ENCODE measurements at regions of chr17 and their contacts with region 1.

Region 1: DNA sequence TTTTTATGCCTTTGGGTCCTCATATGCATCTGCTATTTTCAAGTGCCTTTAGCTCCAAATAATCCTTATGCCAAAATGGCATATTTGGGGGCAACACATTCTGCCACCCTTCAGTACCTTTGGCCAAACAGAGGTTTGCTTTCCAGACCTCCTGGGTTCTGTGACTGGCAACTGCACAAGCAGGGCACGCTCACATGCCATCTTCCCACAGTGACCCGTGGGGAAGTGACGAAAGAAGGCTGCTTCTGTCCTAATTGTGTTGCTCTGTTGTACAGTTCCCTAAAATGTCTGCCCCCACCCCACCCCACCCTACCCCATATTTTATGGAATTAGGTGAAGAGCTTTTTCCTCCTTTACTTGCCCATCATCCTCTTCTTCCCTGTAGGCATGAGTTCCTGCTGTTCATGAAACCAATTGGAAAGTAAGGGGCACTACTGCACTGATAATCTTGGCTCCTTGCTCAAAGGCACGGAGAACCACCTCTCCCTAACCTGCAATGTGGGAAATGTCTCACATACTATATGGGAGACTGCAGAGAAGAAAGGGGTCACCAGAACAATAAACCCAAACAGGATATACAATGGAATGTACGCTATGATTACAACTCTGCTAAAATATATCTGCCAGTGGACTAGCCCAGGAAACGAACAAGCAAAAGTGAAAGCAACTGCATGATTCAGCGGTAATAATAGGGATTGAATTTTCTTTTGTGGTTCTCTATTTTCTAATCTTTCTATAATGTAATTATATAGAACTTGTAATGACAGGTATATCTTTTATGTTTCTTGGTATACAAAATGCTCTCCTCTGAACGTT is 3.3 kb upstream of the SLFN12L start:
- DNase-seq: peak; percentile 46
- ATAC-seq: peak; percentile 30
- H3K4me3 Mint-ChIP-seq: peak overlapping the region; percentile 94
- H3K27ac Mint-ChIP-seq: peak overlapping the region; percentile 99
- H3K4me1 Mint-ChIP-seq: peaks cover 51% of the 10 kb centered on the region
- H3K27me3 Mint-ChIP-seq: no peaks in the 10 kb centered on the region

Region 2: DNA sequence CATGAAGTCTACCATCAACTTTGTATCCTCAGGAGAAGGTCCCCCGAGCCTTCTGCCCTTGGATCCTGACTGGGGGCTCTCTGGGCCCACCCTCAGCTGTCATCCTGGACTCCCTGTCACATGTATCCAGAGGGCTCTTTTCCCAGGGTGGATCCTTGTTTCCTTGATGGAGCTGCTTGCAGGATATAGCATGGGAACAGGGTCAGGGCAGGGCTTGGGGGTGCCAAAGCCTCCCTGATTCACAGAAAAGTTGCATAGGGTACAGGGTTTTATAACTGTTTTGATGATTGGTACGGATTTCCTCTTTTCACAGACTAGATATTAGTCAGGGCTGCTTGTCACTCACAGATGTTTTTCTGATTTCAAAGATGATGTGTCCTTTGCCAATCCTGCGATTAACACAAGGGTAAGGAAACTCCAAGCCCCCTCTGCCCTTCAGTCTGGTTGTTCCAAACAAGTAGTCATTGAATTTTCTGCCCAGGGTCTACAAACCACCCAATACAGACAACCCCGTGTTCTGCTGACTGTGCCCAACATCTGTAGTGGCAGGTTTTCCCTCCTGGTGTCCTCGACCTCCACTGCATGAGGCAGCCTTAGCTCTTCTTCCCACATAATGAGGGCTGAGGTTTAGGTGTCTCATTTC is 326.0 kb before region 1 on chr17:
- POLR2A ChIA-PET with region 1: interaction called, 59 read pairs
- DNase-seq: peak; percentile 61
- ATAC-seq: peak; percentile 55
- H3K4me3 Mint-ChIP-seq: peak overlapping the region; percentile 71
- H3K27ac Mint-ChIP-seq: peak overlapping the region; percentile 92
- H3K4me1 Mint-ChIP-seq: peaks cover 80% of the 10 kb centered on the region
- H3K27me3 Mint-ChIP-seq: no peaks in the 10 kb centered on the region

Region 3: DNA sequence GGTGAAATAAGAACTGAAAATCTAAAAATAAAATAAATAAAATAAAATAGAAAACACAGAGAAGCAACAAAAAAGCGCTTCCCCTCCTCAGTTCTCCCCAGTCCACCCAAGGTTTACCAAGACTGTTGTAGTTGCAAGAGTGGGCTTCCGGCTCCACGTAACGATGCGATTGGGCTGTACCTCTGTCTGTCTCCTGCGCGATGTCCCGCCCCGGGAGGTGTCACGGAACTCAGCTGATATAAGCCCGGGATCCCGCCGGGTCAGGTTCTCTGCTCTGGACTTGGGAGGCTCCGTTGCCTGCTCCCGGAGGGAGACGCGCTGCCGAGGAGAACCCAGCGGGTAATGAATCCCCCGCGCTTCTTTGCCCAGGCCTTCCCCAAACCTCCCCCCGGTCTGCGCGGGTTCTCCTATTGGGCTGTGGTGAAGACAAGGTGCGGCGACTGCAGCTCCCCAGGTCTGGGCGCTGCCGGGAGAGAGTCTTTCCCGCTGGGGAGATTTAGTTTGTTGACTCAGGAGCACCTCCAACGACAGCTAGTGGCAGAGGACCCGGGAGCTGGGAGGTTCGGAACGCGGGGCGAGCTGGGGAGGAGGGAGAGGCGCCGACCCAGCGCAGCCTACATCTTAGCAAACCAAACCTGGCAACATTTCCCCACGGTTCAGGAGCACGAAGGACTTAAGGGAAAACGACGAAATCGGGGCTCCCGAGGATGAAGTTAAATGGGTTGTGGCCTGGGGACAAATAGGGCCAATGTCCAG is 297.8 kb before region 1 on chr17 and contains the start of gene SLFN5:
- POLR2A ChIA-PET with region 1: interaction called, 172 read pairs
- DNase-seq: peak; percentile 96
- ATAC-seq: peak; percentile 73
- H3K4me3 Mint-ChIP-seq: peak within 1 kb of the TSS; percentile 99
- H3K27ac Mint-ChIP-seq: peak within 1 kb of the TSS; percentile 98
- H3K4me1 Mint-ChIP-seq: peaks cover 49% of the 10 kb centered on the region
- H3K27me3 Mint-ChIP-seq: no peaks in the 10 kb centered on the region
- total RNA-seq, gene SLFN5: 239 to 249 TPM

Region 4: GRCh38 chr17:35312790-35313711 is 227.7 kb before region 1 on chr17:
- POLR2A ChIA-PET with region 1: interaction called, 26 read pairs
- DNase-seq: peak; percentile 76
- ATAC-seq: peak; percentile 90
- H3K4me3 Mint-ChIP-seq: peak overlapping the region; percentile 96
- H3K27ac Mint-ChIP-seq: peak overlapping the region; percentile 94
- H3K4me1 Mint-ChIP-seq: peaks cover 28% of the 10 kb centered on the region
- H3K27me3 Mint-ChIP-seq: peaks cover 5% of the 10 kb centered on the region

Region 5: GRCh38 chr17:35486920-35487732 is 53.7 kb before region 1 on chr17:
- POLR2A ChIA-PET with region 1: interaction called, 14 read pairs
- DNase-seq: peak; percentile 67
- ATAC-seq: peak; percentile 63
- H3K4me3 Mint-ChIP-seq: peak overlapping the region; percentile 78
- H3K27ac Mint-ChIP-seq: peak overlapping the region; percentile 87
- H3K4me1 Mint-ChIP-seq: peaks cover 58% of the 10 kb centered on the region
- H3K27me3 Mint-ChIP-seq: no peaks in the 10 kb centered on the region

Region 6: DNA sequence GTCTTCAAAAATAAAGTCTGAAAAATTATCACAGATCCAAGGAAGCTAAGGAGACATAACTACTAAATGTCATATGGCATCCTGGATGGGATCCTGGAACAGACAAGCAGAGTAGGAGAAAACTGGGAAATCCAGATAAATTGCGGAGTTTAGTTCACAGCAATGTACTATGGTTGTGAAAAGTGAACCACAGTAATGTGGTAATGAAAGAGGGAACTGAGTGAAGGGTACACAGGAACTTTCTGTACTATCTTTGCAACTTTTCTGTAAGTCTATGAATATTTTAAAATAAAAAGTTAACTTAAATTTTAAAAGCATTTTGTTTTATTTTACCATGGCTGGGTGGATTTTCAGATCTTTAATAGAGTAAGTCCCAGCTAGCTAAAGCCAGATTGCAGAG is 19.6 kb before region 1 on chr17:
- POLR2A ChIA-PET with region 1: interaction called, 35 read pairs
- DNase-seq: no peak
- ATAC-seq: no peak
- H3K4me3 Mint-ChIP-seq: peak overlapping the region; percentile 78
- H3K27ac Mint-ChIP-seq: peak overlapping the region; percentile 46
- H3K4me1 Mint-ChIP-seq: peaks cover 87% of the 10 kb centered on the region
- H3K27me3 Mint-ChIP-seq: no peaks in the 10 kb centered on the region

Region 7: GRCh38 chr17:35578197-35578928 is 37.6 kb after region 1 on chr17 and contains the start of gene PEX12:
- POLR2A ChIA-PET with region 1: interaction called, 41 read pairs
- DNase-seq: peak; percentile 81
- ATAC-seq: peak; percentile 97
- H3K4me3 Mint-ChIP-seq: peak within 1 kb of the TSS; percentile 84
- H3K27ac Mint-ChIP-seq: peak within 1 kb of the TSS; percentile 93
- H3K4me1 Mint-ChIP-seq: peaks cover 29% of the 10 kb centered on the region
- H3K27me3 Mint-ChIP-seq: no peaks in the 10 kb centered on the region
- total RNA-seq, gene PEX12: 4.4 to 4.6 TPM

Region 8: GRCh38 chr17:35612924-35613521 is 72.2 kb after region 1 on chr17:
- POLR2A ChIA-PET with region 1: no interaction called
- DNase-seq: no peak
- ATAC-seq: no peak
- H3K4me3 Mint-ChIP-seq: no peak overlapping the region
- H3K27ac Mint-ChIP-seq: no peak overlapping the region
- H3K4me1 Mint-ChIP-seq: peaks cover 8% of the 10 kb centered on the region
- H3K27me3 Mint-ChIP-seq: no peaks in the 10 kb centered on the region

Region 9: GRCh38 chr17:35713069-35713728 is 172.4 kb after region 1 on chr17:
- POLR2A ChIA-PET with region 1: no interaction called
- DNase-seq: no peak
- ATAC-seq: no peak
- H3K4me3 Mint-ChIP-seq: no peak overlapping the region
- H3K27ac Mint-ChIP-seq: no peak overlapping the region
- H3K4me1 Mint-ChIP-seq: peaks cover 9% of the 10 kb centered on the region
- H3K27me3 Mint-ChIP-seq: no peaks in the 10 kb centered on the region